ENCODE measurements at regions of chr1 and their contacts with region 1.

Region 1: DNA sequence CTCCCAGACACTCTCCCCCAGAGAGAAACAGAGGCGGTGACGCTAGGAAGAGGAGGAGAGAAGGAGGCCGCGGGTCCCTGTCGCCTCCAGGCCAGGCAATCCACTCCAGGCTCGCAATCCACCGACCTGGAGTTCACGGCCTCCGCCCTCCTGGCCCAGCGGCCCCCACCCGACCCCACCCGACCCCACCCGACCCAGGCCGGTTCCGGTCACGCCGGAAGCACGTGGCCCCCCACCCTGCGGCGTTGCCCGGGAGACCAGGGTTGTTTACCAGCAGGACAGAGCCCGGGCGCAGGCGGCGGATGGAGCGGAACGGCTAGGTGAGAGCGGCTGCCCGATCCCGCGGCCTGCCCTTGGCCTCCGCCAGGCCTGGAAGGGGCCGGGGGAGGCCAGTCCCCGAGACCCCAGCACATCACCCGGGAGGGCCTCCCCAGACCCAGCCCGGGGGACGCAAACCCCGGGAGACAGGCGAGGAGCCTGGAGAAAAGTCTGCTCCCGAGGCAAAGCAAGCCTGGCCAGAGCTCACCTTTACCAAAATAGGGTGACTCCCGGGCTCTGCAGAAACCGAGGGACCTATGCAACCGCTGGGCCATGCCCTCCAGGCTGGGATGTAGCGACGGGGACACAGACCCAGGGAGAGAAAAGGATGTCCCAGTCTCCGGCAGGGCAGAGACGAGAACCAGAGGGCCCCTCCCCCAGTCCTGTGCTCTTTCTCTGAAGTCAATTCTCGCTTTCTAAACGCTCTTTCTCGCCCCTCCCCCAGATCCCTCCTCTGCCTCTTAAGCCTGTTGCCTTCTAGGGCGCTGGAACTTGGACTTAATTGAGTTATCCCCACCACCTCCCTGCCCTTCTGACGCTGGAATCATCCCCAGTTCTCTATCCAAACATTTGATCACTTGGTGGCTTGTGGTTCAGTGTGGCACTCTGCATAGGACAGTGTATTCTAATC is at the starts of genes PLA2G2C and UBXN10:
- DNase-seq: peak; percentile 90
- ATAC-seq: peak; percentile 70
- H3K4me3 Mint-ChIP-seq: peak within 1 kb of the TSS; percentile 68
- H3K27ac Mint-ChIP-seq: peak within 1 kb of the TSS; percentile 85
- H3K4me1 Mint-ChIP-seq: peaks cover 42% of the 10 kb centered on the region
- H3K27me3 Mint-ChIP-seq: peaks cover 15% of the 10 kb centered on the region
- total RNA-seq, gene PLA2G2C: 0.43 to 0.58 TPM
- total RNA-seq, gene UBXN10: 0.41 to 0.63 TPM

Region 2: GRCh38 chr1:19882111-19883071 is 303.7 kb before region 1 on chr1 and contains the start of gene OTUD3:
- CTCF ChIA-PET with region 1: no interaction called
- POLR2A ChIA-PET with region 1: no interaction called
- intact Hi-C with region 1: loop called in 1 of 2 experiments (anchors 1 kb)
- DNase-seq: peak; percentile 96
- ATAC-seq: peak; percentile 98
- H3K4me3 Mint-ChIP-seq: peak within 1 kb of the TSS; percentile 79
- H3K27ac Mint-ChIP-seq: peak within 1 kb of the TSS; percentile 76
- H3K4me1 Mint-ChIP-seq: peaks cover 36% of the 10 kb centered on the region
- H3K27me3 Mint-ChIP-seq: peaks cover 4% of the 10 kb centered on the region
- total RNA-seq, gene OTUD3: 6.6 to 9.2 TPM

Region 3: GRCh38 chr1:20143734-20144565 is 42.2 kb before region 1 on chr1:
- CTCF ChIA-PET with region 1: no interaction called
- POLR2A ChIA-PET with region 1: no interaction called
- intact Hi-C with region 1: no loop called
- DNase-seq: no peak
- ATAC-seq: no peak
- H3K4me3 Mint-ChIP-seq: no peak overlapping the region
- H3K27ac Mint-ChIP-seq: no peak overlapping the region
- H3K4me1 Mint-ChIP-seq: no peaks in the 10 kb centered on the region
- H3K27me3 Mint-ChIP-seq: peaks cover 5% of the 10 kb centered on the region

Region 4: DNA sequence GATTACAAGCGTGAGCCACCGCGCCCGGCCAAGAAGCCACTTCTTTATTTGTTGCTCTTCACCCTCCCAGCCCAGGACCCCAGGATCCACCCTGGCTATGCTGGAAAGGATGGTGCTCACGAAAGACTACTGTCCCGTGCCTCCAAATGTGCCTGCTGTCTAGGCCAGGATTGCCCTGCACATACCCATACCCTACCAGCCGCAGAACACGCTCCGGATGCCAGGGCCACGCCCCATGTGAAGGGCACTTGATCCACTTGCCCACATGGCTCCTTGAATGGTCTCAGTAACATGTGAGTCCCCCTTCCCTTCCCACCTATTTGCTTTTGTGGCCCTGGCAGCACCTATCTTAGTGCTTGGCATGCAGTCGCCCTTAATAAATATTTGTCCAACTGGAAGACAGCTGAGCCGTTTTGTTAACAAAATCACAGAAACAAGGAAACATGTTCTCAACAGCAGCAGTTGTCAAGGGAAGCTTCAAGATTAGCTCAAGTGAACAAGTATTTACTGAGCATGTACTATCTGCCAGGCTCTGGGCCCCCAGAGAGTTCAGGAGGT is 14.0 kb before region 1 on chr1:
- CTCF ChIA-PET with region 1: interaction called, 4 read pairs
- POLR2A ChIA-PET with region 1: no interaction called
- intact Hi-C with region 1: loop called (anchors 1 to 2 kb)
- DNase-seq: no peak
- ATAC-seq: no peak
- H3K4me3 Mint-ChIP-seq: no peak overlapping the region
- H3K27ac Mint-ChIP-seq: no peak overlapping the region
- H3K4me1 Mint-ChIP-seq: peaks cover 23% of the 10 kb centered on the region
- H3K27me3 Mint-ChIP-seq: peaks cover 4% of the 10 kb centered on the region

Region 5: DNA sequence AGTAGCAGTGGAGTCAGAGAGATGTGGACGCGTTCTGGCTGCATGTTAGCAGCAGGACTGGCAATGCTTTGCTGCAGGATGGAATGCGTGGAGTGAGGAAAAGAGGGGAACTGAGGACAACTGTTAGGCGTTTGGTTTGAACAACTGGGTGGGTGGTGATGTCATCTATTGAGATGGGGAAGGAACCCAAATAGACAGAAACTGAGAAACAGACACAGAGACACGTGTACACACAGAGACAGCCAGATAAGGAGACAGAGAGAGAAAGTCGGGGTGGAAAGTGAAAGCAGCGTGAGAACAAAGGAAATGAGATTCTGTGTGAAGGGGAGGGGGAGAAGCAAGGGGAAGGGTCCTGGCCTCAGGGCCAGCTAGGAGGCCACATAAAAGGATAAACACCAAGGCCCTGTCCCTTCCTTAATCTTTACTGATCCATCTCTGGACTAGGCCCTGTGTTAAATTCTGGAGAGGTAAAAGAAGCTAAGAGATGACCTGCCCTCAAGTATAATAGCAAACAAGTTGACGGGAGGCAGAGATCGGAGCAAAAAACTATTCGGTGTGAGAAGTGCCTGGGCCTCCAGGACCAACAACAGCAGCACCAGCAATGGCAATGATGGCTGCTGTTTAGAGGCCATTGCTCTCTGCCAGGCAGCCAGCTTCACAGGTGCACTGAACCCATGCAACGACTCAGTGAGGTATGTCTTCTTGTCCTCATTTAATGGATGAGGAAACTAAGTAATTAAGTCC is 136.1 kb after region 1 on chr1:
- CTCF ChIA-PET with region 1: no interaction called
- POLR2A ChIA-PET with region 1: no interaction called
- intact Hi-C with region 1: loop called in 1 of 2 experiments (anchors 1 kb)
- DNase-seq: peak; percentile 55
- ATAC-seq: peak; percentile 82
- H3K4me3 Mint-ChIP-seq: peak overlapping the region; percentile 7
- H3K27ac Mint-ChIP-seq: peak overlapping the region; percentile 20
- H3K4me1 Mint-ChIP-seq: peaks cover 31% of the 10 kb centered on the region
- H3K27me3 Mint-ChIP-seq: peaks cover 19% of the 10 kb centered on the region

Region 6: DNA sequence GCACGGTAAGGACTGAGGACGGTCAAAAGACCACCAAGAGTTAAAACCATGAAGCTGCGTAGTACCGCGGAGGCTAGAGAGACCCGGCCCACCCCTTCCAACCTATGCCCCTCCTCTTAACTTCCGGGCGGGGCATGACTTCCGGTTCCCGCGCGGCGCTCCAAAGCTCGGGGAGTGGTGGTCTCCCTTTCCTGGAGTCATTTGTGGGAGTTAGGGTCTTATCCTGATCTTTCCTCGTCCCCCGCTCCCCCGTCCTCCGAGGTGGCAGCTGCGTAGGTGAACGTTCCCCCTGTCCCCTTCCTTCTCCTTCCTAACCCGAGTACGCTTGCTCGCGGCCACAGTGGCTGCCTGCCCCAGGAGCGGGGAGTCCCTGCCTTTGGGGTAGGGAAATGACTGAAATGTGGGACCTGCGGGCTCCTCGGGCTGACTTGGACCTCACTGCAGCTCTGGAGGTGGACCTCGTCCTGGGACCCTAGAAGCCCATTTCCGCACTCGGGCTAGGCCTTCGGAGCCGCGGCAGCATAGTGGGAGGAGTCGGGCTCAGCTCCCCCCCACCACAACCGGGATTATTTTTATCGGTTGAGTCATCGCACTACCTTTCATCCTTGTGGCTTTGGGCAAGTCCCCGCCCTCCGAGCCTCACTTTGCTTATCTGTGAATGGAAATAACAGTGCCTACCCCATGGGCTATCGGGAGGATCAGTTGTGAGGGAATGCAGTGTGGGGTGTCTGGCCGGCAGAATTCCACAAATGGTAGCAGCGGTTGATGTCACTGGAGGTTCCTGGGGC is 1839.5 kb after region 1 on chr1:
- CTCF ChIA-PET with region 1: no interaction called
- POLR2A ChIA-PET with region 1: no interaction called
- intact Hi-C with region 1: loop called in 1 of 2 experiments (anchors 5 kb)
- DNase-seq: peak; percentile 94
- ATAC-seq: peak; percentile 74
- H3K4me3 Mint-ChIP-seq: peak overlapping the region; percentile 82
- H3K27ac Mint-ChIP-seq: peak overlapping the region; percentile 99
- H3K4me1 Mint-ChIP-seq: peaks cover 59% of the 10 kb centered on the region
- H3K27me3 Mint-ChIP-seq: no peaks in the 10 kb centered on the region

Measured in activated CD4-positive, alpha-beta T cell treated with anti-CD3 and anti-CD28 coated beads for 36 hours (primary cell).